SK-N-SH (cell line): ENCODE measurements at regions of chr1 and their contacts with region 1.

Region 1: DNA sequence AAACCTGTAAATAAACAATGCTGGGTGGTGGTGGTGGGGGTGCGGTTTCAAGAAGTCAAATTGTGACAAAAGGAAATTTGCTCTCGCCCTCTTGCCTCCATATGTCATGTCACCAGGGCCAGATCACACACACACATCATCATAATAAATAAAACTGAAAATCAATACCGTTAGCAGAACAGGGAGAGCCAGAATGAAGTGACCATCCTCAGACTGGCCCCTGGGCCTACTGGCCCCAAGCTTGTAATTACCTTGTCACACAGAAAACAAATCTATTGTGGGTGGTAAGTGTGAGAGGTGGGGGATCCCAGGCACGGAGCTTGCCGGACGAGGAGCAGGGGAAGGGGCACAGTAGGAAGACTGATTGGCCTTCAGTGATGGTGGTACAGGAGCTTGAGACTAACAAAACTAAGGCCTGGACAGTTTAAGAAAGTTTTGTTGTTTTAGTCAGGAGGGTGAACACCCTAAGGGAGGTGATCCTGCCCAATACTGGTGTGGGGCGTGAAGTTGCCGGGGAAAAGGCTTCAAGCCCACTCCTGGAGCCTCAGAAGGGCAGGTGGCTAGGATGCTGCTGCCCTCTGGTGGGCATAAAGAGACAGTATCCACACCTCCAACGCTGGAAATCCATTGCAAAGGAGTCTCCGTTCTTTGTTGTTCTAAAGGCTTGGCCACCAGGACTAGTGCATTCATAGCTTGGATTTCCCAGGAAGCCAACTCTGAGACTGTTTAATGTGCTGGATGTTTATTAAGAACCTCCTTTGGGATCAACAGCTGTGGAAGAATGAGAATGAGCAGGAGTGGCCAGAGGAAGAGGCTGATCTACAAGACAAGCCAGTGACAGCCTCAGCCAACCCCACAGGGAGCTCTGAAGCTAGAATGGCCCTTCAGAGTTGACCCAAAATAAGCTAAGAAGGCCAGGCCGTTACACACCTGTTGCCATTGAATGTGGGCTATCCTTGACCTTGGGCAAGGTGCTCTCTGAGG is 8.1 kb upstream of the C1orf216 start:
- DNase-seq: peak; percentile 76
- H3K4me3 ChIP-seq: no peak overlapping the region; a peak in 1 of 4 replicates
- H3K27ac ChIP-seq: no peak overlapping the region
- H3K4me1 ChIP-seq: no peaks in the 10 kb centered on the region
- H3K27me3 ChIP-seq: no peaks in the 10 kb centered on the region
- CTCF ChIP-seq: peak; percentile 89
- EP300 ChIP-seq: no peak
- RAD21 ChIP-seq: peak; percentile 94

Region 2: GRCh38 chr1:35557292-35558063 is 169.3 kb before region 1 on chr1 and contains the starts of genes KIAA0319L and NCDN:
- CTCF ChIA-PET with region 1: interaction called, 17 read pairs
- POLR2A ChIA-PET with region 1: no interaction called
- DNase-seq: peak; percentile 96
- H3K4me3 ChIP-seq: peak within 1 kb of the TSS; percentile 88 to 89
- H3K27ac ChIP-seq: peak within 1 kb of the TSS; percentile 91 to 99
- H3K4me1 ChIP-seq: peaks cover 4 to 41% of the 10 kb centered on the region in 2 experiments; a peak in 3 of 4 replicates
- H3K27me3 ChIP-seq: no peaks in the 10 kb centered on the region
- CTCF ChIP-seq: no peak
- EP300 ChIP-seq: no peak
- RAD21 ChIP-seq: no peak
- polyA plus RNA-seq, gene KIAA0319L: 51.9 and 63.2 TPM in 2 replicates
- polyA plus RNA-seq, gene NCDN: 34.6 and 38.3 TPM in 2 replicates

Region 3: GRCh38 chr1:35577071-35577998 is 149.4 kb before region 1 on chr1:
- CTCF ChIA-PET with region 1: interaction called, 347 read pairs
- POLR2A ChIA-PET with region 1: no interaction called
- DNase-seq: no peak
- H3K4me3 ChIP-seq: no peak overlapping the region
- H3K27ac ChIP-seq: no peak overlapping the region
- H3K4me1 ChIP-seq: peaks cover 0 to 5% of the 10 kb centered on the region in 2 experiments; a peak in 1 of 4 replicates
- H3K27me3 ChIP-seq: no peaks in the 10 kb centered on the region
- CTCF ChIP-seq: no peak
- EP300 ChIP-seq: no peak
- RAD21 ChIP-seq: no peak

Region 4: GRCh38 chr1:35715568-35716002 is 11.2 kb before region 1 on chr1:
- CTCF ChIA-PET with region 1: interaction called, 124 read pairs
- POLR2A ChIA-PET with region 1: no interaction called
- DNase-seq: peak; percentile 90
- H3K4me3 ChIP-seq: peak overlapping the region; percentile 10 to 46; a peak in 1 of 4 replicates
- H3K27ac ChIP-seq: peak overlapping the region in 1 of 2 experiments; percentile 40; a peak in 2 of 4 replicates
- H3K4me1 ChIP-seq: peaks cover 0 to 24% of the 10 kb centered on the region in 2 experiments; a peak in 2 of 4 replicates
- H3K27me3 ChIP-seq: no peaks in the 10 kb centered on the region
- CTCF ChIP-seq: peak; percentile 93
- EP300 ChIP-seq: no peak
- RAD21 ChIP-seq: peak; percentile 80

Region 5: GRCh38 chr1:35747938-35748702 is 21.4 kb after region 1 on chr1:
- CTCF ChIA-PET with region 1: interaction called, 116 read pairs
- POLR2A ChIA-PET with region 1: no interaction called
- DNase-seq: no peak
- H3K4me3 ChIP-seq: no peak overlapping the region
- H3K27ac ChIP-seq: no peak overlapping the region
- H3K4me1 ChIP-seq: no peaks in the 10 kb centered on the region
- H3K27me3 ChIP-seq: no peaks in the 10 kb centered on the region
- CTCF ChIP-seq: no peak
- EP300 ChIP-seq: no peak
- RAD21 ChIP-seq: no peak

Region 6: GRCh38 chr1:35769188-35769758 is 42.5 kb after region 1 on chr1:
- CTCF ChIA-PET with region 1: interaction called, 40 read pairs
- POLR2A ChIA-PET with region 1: interaction called, 3 read pairs
- DNase-seq: peak; percentile 95
- H3K4me3 ChIP-seq: peak overlapping the region; percentile 83 to 89
- H3K27ac ChIP-seq: peak overlapping the region; percentile 73 to 89
- H3K4me1 ChIP-seq: peaks cover 4% of the 10 kb centered on the region in 2 experiments; a peak in 2 of 4 replicates
- H3K27me3 ChIP-seq: no peaks in the 10 kb centered on the region
- CTCF ChIP-seq: no peak; the same call in 1 of the 2 replicates
- EP300 ChIP-seq: no peak
- RAD21 ChIP-seq: no peak